Activated naive CD4-positive, alpha-beta T cell treated with anti-CD3 and anti-CD28 coated beads for 36 hours (primary cell): ENCODE measurements at regions of chr1 and their contacts with region 1.

Region 1: GRCh38 chr1:27357281-27358037 is 9.3 kb downstream of the MAP3K6 start:
- DNase-seq: peak; percentile 86
- H3K4me3 Mint-ChIP-seq: peak overlapping the region; percentile 70
- H3K27ac Mint-ChIP-seq: peak overlapping the region; percentile 78
- H3K4me1 Mint-ChIP-seq: peaks cover 38% of the 10 kb centered on the region
- H3K27me3 Mint-ChIP-seq: no peaks in the 10 kb centered on the region

Region 2: DNA sequence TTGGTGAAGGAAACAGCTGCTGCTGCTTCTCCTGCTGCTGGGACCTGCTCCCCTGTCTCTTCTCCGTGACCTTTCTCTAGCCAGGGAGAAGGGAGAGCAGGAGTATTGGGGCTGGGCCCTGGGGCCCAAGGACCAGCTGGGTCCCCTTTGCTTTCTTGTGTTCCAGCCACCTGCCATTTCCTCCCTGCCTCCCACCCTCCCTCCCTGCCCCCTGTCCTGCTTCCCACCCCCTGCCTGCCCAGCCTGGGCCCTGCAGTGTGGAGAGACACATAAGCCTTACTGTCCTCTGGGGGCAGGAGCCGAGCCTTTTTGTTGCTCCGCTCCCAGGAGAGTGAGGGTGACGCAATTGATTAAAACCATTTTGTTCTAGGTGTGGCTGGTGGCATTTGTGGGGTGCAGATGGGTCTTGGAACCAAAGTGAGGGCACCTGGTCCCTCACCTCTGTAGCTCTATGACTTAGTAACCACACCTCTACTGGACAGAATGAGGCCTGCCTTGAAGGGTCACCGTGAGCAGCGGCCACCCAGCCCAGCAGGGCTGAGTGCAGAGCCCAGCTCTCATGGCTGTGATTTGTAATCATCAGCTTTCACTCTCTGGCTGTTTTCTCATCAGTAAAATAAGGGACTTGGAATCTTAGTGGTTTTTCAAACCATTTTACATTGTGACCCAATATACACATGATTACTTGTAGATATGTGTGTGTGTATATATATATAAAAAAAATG is 49.4 kb before region 1 on chr1:
- CTCF ChIA-PET with region 1: no interaction called
- intact Hi-C with region 1: no loop called
- DNase-seq: no peak
- H3K4me3 Mint-ChIP-seq: no peak overlapping the region
- H3K27ac Mint-ChIP-seq: no peak overlapping the region
- H3K4me1 Mint-ChIP-seq: no peaks in the 10 kb centered on the region
- H3K27me3 Mint-ChIP-seq: no peaks in the 10 kb centered on the region

Region 3: DNA sequence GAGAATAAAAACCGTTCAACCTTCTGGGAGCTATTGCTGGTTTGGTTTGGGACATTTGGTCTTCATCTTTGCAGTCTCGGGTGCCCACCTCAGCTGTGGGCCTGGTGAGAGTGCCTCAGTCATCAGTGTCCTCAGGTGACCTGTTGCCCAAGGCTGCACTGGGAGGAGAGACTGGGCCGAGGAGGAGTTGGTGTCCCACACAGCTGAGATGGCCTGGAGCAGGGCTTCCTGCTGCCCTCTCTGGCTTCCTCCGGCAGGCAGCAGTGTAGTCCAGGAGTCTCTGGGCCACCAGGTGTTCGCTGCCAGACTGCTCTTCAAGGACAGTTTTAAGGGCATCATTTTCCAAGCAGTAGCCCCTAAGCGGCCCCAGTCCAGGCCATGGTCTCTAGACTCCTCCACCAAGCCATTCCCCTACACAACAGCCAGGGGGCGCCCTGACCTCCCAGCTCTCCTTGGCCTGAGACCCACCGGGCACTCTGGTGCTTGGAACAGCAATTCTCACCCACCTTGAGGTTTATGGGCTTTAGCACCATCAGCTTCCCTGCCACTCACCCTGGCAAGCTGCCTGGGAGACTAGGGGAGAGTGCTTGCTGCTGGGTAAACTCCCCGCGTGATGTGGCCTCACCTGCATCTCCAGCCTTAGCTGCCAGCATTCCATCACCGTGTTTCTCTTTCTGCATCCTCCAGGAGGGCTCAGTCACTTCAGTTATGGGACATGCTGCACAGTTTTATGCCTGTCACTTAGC is 24.8 kb before region 1 on chr1:
- CTCF ChIA-PET with region 1: interaction called, 18 read pairs
- intact Hi-C with region 1: no loop called
- DNase-seq: peak; percentile 68
- H3K4me3 Mint-ChIP-seq: no peak overlapping the region
- H3K27ac Mint-ChIP-seq: no peak overlapping the region
- H3K4me1 Mint-ChIP-seq: peaks cover 26% of the 10 kb centered on the region
- H3K27me3 Mint-ChIP-seq: no peaks in the 10 kb centered on the region

Region 4: DNA sequence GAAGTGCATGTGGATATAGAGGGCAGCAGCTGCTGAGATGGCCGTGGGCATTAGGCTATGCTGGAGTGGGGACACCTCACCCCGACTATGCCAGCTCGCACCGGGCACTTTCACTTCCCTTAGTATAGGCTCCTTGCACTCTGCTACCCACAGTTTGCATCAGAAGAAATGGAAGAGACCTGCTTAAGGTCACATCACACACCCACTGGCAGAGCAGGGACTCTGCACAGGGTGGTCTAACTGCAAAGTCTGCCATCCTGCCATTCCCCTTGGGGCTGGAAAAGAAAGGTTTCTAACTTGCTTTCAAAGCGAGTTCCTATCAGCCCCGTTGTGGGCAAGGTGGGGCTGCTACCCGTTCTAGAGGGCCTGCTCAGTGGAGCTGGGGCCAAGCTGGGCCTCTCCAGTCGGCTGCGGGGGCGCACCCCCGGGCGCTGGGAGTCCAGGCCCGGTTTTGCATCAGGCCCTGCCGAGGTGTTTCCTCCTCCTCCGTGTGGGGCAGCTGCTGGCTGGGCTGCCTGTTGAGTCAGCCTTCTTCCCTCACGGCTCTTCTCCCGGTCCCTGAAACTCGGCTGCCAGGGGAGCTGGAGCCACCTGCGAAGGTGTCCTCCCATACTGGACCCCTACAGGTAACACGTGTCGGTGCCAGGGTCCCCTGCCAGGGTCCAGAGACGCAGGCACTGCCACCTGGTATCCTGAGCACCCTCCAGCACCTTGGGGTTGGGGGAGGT is 15.8 kb before region 1 on chr1 and contains the start of gene SYTL1:
- CTCF ChIA-PET with region 1: interaction called, 37 read pairs
- intact Hi-C with region 1: loop called (anchors 1 kb)
- DNase-seq: peak; percentile 77
- H3K4me3 Mint-ChIP-seq: peak within 1 kb of the TSS; percentile 83
- H3K27ac Mint-ChIP-seq: peak within 1 kb of the TSS; percentile 85
- H3K4me1 Mint-ChIP-seq: peaks cover 49% of the 10 kb centered on the region
- H3K27me3 Mint-ChIP-seq: no peaks in the 10 kb centered on the region
- total RNA-seq, gene SYTL1: 28.5 to 29.2 TPM